AG04450 (cell line): ENCODE measurements at regions of chr7 and their contacts with region 1.

Region 1: DNA sequence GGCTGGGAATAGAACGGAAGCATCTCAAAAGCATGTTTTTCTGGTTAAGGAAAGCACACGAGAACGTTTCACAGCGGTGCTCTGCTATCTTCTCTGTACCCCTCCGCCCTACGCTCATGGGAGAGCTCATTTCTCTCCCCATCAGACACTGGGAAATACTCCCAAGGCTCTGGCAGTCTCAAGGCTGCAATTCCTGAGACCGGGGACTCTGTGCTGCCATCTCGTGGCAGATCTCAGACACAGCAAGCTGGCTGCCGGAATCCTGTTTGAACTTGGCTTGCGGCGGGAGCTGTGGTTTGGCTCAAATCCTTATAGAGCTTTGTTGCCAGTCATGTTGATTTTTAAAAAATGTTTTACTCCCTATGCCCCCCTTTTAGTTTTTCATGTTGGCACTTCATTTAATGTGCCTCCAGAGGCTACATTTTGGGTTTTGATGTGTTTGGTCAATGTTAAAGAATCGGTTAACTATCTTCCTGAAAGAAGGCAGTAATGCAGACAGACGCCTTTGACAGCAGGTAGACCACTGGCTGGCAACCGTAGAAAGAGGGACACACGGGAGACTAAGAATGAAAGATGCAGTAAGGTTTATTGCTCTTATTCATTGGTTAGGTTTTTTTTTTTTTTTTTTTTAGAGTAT is 27.6 kb downstream of the BMPER start:
- DNase-seq: peak; percentile 61
- H3K4me3 ChIP-seq: no peak overlapping the region
- H3K27ac ChIP-seq: no peak overlapping the region
- H3K27me3 ChIP-seq: no peaks in the 10 kb centered on the region
- CTCF ChIP-seq: peak; percentile 99

Region 2: GRCh38 chr7:33248671-33249070 is 684.3 kb before region 1 on chr7:
- CTCF ChIA-PET with region 1: interaction called, 64 read pairs
- POLR2A ChIA-PET with region 1: no interaction called
- DNase-seq: no peak
- H3K4me3 ChIP-seq: no peak overlapping the region
- H3K27ac ChIP-seq: no peak overlapping the region
- H3K27me3 ChIP-seq: no peaks in the 10 kb centered on the region
- CTCF ChIP-seq: no peak

Region 3: GRCh38 chr7:33711626-33712414 is 221.1 kb before region 1 on chr7:
- CTCF ChIA-PET with region 1: interaction called, 21 read pairs
- POLR2A ChIA-PET with region 1: no interaction called
- DNase-seq: no peak
- H3K4me3 ChIP-seq: no peak overlapping the region
- H3K27ac ChIP-seq: no peak overlapping the region
- H3K27me3 ChIP-seq: no peaks in the 10 kb centered on the region
- CTCF ChIP-seq: no peak

Region 4: GRCh38 chr7:33886149-33886623 is 46.8 kb before region 1 on chr7:
- CTCF ChIA-PET with region 1: interaction called, 21 read pairs
- POLR2A ChIA-PET with region 1: no interaction called
- DNase-seq: no peak
- H3K4me3 ChIP-seq: no peak overlapping the region
- H3K27ac ChIP-seq: peak overlapping the region; percentile 58
- H3K27me3 ChIP-seq: no peaks in the 10 kb centered on the region
- CTCF ChIP-seq: peak; percentile 65

Region 5: GRCh38 chr7:33946094-33946700 is 13.2 kb after region 1 on chr7:
- CTCF ChIA-PET with region 1: interaction called, 38 read pairs
- POLR2A ChIA-PET with region 1: no interaction called
- DNase-seq: no peak
- H3K4me3 ChIP-seq: no peak overlapping the region
- H3K27ac ChIP-seq: no peak overlapping the region
- H3K27me3 ChIP-seq: no peaks in the 10 kb centered on the region
- CTCF ChIP-seq: no peak

Region 6: GRCh38 chr7:34064547-34065014 is 131.6 kb after region 1 on chr7:
- CTCF ChIA-PET with region 1: interaction called, 14 read pairs
- POLR2A ChIA-PET with region 1: no interaction called
- DNase-seq: no peak
- H3K4me3 ChIP-seq: no peak overlapping the region
- H3K27ac ChIP-seq: no peak overlapping the region
- H3K27me3 ChIP-seq: no peaks in the 10 kb centered on the region
- CTCF ChIP-seq: no peak

Region 7: DNA sequence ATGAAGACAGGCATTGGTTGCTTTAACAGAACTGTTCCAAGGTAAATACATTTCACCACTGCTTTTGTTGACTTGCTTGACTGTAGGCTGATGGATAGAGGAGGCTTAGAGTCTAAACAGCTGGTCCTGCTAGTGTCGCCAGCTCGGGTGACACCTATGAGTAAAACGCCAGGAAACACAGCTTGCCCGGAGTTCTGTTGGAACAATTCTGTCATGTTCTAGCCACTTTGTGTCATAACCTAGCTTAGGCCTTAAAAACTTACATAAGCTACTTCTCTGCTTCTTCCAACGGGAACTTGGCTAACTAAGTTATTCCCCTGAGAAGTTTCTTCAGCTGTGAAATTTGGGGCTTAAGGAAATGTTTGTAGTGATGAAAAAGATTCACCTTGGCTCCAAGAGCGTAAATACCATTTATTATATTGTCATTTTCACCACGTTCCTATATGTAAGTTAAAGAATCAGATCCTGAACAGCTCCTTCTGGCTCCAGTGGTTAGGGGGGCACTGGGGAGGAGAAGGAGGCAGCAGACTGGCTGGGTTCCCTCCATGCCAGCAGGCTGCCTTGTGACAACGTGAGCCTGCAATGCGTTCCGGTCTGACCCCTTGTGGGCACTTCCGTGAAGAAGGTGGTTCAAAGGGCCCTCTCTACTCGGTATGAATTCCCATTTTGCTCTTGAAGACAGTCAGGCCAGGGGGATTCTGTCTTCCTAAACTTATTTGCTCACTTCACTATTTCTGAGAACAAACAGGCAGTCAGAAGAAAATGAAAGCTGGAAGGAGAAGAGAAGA is 225.6 kb after region 1 on chr7:
- CTCF ChIA-PET with region 1: interaction called, 10 read pairs
- POLR2A ChIA-PET with region 1: no interaction called
- DNase-seq: no peak
- H3K4me3 ChIP-seq: no peak overlapping the region
- H3K27ac ChIP-seq: no peak overlapping the region
- H3K27me3 ChIP-seq: no peaks in the 10 kb centered on the region
- CTCF ChIP-seq: peak; percentile 20; the same call in 1 of the 2 replicates